HCT116 (cell line): ENCODE measurements at regions of chr14 and their contacts with region 1.

Region 1: DNA sequence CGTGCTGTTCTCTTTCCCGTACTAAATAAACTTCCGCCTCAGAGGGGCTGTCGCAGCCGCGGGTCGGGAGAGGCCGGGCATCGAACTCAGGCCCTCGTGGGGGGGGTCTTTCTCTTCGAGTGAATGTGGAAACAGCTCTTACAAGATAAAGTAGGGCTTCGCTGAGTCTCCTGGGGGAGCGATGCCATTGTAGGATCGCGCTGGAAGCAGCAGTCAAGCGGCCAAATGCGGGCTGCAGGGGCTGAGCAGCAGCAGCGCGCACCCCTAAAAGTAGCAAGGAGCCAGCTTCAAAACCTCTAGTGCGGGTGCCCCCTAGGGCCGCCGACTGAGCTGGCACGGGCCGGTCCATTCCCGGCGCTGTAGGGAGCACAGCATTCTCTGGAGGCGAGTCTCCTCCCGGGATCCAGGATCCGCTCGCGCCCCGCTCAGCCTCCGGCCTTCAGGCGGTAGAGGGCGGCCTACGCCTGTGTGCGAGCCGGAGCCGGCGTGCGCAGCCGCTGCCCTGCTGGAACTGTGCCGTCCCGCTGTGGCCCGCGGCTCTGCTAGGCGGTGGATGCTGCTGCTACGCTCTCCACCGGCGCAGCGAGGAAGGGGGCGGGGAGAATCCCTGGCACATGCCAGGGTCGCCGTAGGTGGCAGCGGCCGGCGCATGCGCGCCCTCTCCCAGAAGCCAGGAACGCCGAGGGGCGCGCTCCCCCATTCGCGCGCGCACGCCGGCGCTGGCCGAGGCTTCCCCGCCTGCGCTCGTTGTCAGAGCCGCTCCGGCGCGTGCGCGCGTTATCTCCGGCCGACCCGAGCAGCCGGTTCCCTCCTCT is at the start of gene FUT8:
- DNase-seq: peak; percentile 88
- ATAC-seq: peak; percentile 86
- H3K4me3 ChIP-seq: peak within 1 kb of the TSS; percentile 71 to 91
- H3K27ac ChIP-seq: peak within 1 kb of the TSS; percentile 93
- H3K4me1 ChIP-seq: peaks cover 2 to 21% of the 10 kb centered on the region in 2 experiments; a peak in 2 of 4 replicates
- H3K27me3 ChIP-seq: no peaks in the 10 kb centered on the region
- CTCF ChIP-seq: peak; percentile 46 to 56 (median 49); a peak in 5 of 6 replicates
- POLR2A ChIP-seq: peak; percentile 69
- RAD21 ChIP-seq: peak; percentile 70
- total RNA-seq, gene FUT8: 42.3 TPM

Region 2: DNA sequence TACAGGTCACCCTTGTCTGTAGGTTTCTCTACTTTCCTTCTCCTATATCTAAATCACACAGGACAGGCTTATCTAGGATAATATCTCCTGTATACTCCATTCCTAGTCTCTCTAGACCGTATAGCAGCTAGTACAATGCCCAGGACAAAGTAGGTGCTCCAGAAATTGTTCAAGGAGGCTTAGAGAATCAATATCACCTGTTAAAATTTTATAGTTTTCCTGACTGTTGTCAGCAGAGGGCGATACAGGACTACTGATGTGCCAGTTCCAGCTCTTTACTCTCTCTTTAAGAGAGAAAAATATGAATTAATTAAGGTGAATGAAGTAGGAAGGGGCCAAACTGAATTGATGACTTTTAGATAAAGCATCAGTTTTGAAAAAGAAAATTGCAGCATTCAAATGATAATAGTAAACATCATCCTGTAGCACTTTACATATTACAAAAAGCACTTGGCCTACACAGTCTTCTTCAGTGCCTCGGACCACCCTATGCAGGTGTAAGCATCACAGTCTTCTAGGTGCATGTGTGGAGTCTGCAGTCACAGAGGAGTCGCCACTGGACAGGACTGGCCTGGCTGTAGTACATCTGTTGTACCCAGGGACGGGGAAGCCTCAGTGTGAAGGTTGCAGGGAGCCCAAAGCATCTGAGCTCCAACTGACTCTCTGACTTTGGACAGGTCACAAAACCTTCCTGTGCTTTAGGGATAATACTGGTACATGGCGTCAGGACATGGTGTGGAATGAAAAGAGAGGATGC is 248.0 kb before region 1 on chr14:
- CTCF ChIA-PET with region 1: interaction called, 17 read pairs
- POLR2A ChIA-PET with region 1: interaction called, 7 read pairs
- RAD21 ChIA-PET with region 1: interaction called, 3 to 5 read pairs
- intact Hi-C with region 1: loop called (anchors 1 kb)
- DNase-seq: peak; percentile 51
- ATAC-seq: peak; percentile 82
- H3K4me3 ChIP-seq: no peak overlapping the region
- H3K27ac ChIP-seq: no peak overlapping the region
- H3K4me1 ChIP-seq: no peaks in the 10 kb centered on the region
- H3K27me3 ChIP-seq: no peaks in the 10 kb centered on the region
- CTCF ChIP-seq: peak; percentile 44 to 83 (median 81); a peak in 5 of 6 replicates
- POLR2A ChIP-seq: no peak
- RAD21 ChIP-seq: peak; percentile 94

Region 3: GRCh38 chr14:65287264-65288131 is 124.7 kb before region 1 on chr14:
- CTCF ChIA-PET with region 1: interaction called, 7 read pairs
- POLR2A ChIA-PET with region 1: no interaction called
- RAD21 ChIA-PET with region 1: interaction called in 1 of 2 experiments, 3 read pairs
- intact Hi-C with region 1: loop called (anchors 5 kb)
- DNase-seq: no peak
- ATAC-seq: no peak
- H3K4me3 ChIP-seq: no peak overlapping the region
- H3K27ac ChIP-seq: no peak overlapping the region
- H3K4me1 ChIP-seq: peaks cover 6 to 43% of the 10 kb centered on the region in 2 experiments
- H3K27me3 ChIP-seq: no peaks in the 10 kb centered on the region
- CTCF ChIP-seq: no peak
- POLR2A ChIP-seq: no peak
- RAD21 ChIP-seq: no peak

Region 4: GRCh38 chr14:65604936-65605335 is 192.7 kb after region 1 on chr14:
- CTCF ChIA-PET with region 1: interaction called, 5 read pairs
- POLR2A ChIA-PET with region 1: no interaction called
- RAD21 ChIA-PET with region 1: no interaction called
- intact Hi-C with region 1: loop called (anchors 5 kb)
- DNase-seq: no peak
- ATAC-seq: no peak
- H3K4me3 ChIP-seq: no peak overlapping the region
- H3K27ac ChIP-seq: no peak overlapping the region
- H3K4me1 ChIP-seq: no peaks in the 10 kb centered on the region
- H3K27me3 ChIP-seq: no peaks in the 10 kb centered on the region
- CTCF ChIP-seq: peak in 2 of 3 experiments; percentile 26 to 34; a peak in 2 of 6 replicates
- POLR2A ChIP-seq: no peak
- RAD21 ChIP-seq: peak; percentile 55

Region 5: GRCh38 chr14:65824285-65824977 is 412.2 kb after region 1 on chr14:
- CTCF ChIA-PET with region 1: interaction called, 99 read pairs
- POLR2A ChIA-PET with region 1: interaction called, 3 read pairs
- RAD21 ChIA-PET with region 1: interaction called, 11 to 18 read pairs
- intact Hi-C with region 1: loop called (anchors 2 kb)
- DNase-seq: peak; percentile 56
- ATAC-seq: peak; percentile 94
- H3K4me3 ChIP-seq: no peak overlapping the region
- H3K27ac ChIP-seq: no peak overlapping the region
- H3K4me1 ChIP-seq: no peaks in the 10 kb centered on the region
- H3K27me3 ChIP-seq: peaks cover 20% of the 10 kb centered on the region; the same call in 1 of the 2 replicates
- CTCF ChIP-seq: peak; percentile 64 to 93 (median 87); a peak in 5 of 6 replicates
- POLR2A ChIP-seq: no peak
- RAD21 ChIP-seq: peak; percentile 80

Region 6: DNA sequence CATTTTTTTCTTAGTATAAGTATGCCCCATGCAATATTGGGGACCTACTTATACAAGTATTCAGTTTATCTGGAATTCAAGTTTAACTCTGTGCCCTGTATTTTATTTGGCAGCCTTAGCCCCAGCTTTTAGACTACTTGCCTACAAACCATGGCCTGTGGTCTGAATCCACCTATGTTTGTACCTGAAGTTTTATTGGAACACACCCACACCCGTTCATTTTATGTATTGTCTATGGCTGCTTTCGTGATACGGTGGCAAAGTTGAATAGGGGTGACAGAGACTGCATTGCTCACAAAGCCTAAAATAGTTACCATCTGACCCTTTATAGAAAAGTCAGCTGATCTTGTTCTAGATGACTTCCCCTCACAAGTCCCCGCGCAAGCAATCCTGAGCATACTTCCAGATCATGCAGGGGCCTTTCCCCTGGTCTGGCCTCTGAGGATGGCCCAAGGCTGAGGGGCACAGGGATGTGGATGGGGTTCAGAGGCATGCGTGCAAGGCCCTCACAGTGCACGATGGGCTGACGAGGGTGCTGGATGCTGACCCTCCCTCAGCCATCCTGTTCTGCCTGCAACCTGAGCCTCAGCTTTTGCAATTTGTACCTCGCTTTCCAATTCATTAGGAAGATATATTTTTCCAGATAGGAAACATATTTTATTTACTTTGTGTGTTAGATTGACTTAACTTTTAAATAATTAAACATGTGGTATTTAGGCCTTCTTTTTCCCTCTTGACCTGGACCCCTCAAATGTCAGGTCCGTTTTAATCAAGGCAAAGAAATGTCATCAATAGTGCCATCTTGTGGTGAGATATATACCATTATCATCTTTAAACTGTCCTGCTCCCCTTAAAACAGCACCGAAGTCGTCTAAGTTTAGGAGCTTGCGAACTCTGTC is 546.7 kb after region 1 on chr14:
- CTCF ChIA-PET with region 1: interaction called, 65 read pairs
- POLR2A ChIA-PET with region 1: no interaction called
- RAD21 ChIA-PET with region 1: no interaction called
- intact Hi-C with region 1: loop called (anchors 2 kb)
- DNase-seq: peak; percentile 15
- ATAC-seq: peak; percentile 62
- H3K4me3 ChIP-seq: no peak overlapping the region
- H3K27ac ChIP-seq: no peak overlapping the region
- H3K4me1 ChIP-seq: no peaks in the 10 kb centered on the region
- H3K27me3 ChIP-seq: no peaks in the 10 kb centered on the region; the same call in 1 of the 2 replicates
- CTCF ChIP-seq: peak; percentile 23 to 63 (median 42); a peak in 3 of 6 replicates
- POLR2A ChIP-seq: no peak
- RAD21 ChIP-seq: peak; percentile 62

Region 7: GRCh38 chr14:66131111-66131510 is 718.9 kb after region 1 on chr14:
- CTCF ChIA-PET with region 1: no interaction called
- POLR2A ChIA-PET with region 1: no interaction called
- RAD21 ChIA-PET with region 1: no interaction called
- intact Hi-C with region 1: no loop called
- DNase-seq: no peak
- ATAC-seq: no peak
- H3K4me3 ChIP-seq: no peak overlapping the region
- H3K27ac ChIP-seq: no peak overlapping the region
- H3K4me1 ChIP-seq: no peaks in the 10 kb centered on the region
- H3K27me3 ChIP-seq: no peaks in the 10 kb centered on the region
- CTCF ChIP-seq: no peak
- POLR2A ChIP-seq: no peak
- RAD21 ChIP-seq: no peak